Activated naive CD4-positive, alpha-beta T cell treated with anti-CD3 and anti-CD28 coated beads for 36 hours (primary cell): ENCODE measurements at regions of chr10 and their contacts with region 1.

Region 1: DNA sequence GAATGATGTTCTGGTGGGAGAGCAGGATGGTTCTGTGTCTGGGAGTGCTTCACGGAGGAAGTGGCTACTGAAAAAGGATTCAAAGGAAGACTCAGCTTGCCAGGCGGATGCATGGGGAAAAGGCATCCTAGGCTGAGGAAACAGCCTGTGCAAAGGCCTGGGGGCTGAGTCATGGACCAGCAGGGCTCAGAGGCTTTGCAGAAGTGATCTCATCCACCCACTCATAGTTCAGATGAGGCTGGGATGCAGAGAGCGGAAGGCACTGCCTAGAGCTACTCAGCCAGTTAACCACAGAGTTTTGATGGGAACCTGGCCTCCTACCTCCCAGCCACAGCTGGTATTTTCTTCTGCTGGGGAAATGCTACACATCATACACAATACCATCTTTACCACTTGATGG is 15.8 kb upstream of the ADAMTS14 start:
- DNase-seq: peak; percentile 78
- H3K4me3 Mint-ChIP-seq: no peak overlapping the region
- H3K27ac Mint-ChIP-seq: no peak overlapping the region
- H3K4me1 Mint-ChIP-seq: peaks cover 10% of the 10 kb centered on the region
- H3K27me3 Mint-ChIP-seq: no peaks in the 10 kb centered on the region

Region 2: DNA sequence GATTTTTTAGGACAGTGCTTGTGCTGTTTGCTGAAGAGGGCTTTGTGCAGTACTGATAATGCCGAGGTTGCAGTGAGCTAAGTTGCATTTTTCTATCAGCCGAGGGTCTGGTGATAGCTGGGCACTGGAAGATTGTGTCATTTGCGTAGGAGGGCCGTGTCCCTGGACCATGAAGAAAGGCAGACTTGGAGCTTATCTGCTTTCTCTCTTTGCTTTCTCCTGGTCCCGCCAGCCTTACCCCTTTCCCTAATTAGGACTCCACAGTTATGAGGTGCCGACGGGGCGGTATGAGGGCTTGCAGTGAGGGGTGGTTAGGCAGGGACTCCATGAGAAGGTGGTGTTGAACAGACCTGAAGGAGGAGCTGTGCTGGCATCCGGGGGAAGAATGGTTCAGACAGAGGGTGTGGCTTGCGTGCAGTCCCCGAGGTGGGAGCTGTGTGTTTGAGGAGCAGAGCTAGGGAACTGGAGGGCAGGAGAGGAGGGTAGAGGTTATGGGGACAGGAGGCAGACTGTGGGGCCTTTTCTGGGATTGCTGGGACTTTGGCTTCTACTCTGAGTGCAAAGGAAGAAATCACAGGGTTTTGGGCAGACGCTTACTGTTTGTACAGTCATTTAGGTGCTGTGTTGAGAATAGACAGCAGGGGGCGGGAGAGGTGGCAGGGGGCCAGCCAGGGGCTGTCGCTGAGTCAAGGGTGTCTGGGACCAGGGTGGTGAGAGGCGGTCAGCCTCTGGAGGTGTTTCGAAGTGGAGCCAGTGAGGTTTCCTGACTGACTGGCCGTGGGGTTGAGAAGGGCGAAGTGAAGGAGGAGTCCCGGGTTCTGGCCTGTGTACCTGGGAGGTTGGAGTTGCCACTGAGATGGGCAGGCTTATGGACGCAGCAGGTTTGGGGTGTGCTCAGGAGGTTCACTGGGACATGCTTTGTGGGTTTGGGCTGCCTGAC is 97.3 kb before region 1 on chr10:
- CTCF ChIA-PET with region 1: interaction called, 4 read pairs
- intact Hi-C with region 1: loop called (anchors 2 kb)
- DNase-seq: peak; percentile 81
- H3K4me3 Mint-ChIP-seq: peak overlapping the region; percentile 69
- H3K27ac Mint-ChIP-seq: no peak overlapping the region
- H3K4me1 Mint-ChIP-seq: peaks cover 11% of the 10 kb centered on the region
- H3K27me3 Mint-ChIP-seq: no peaks in the 10 kb centered on the region

Region 3: DNA sequence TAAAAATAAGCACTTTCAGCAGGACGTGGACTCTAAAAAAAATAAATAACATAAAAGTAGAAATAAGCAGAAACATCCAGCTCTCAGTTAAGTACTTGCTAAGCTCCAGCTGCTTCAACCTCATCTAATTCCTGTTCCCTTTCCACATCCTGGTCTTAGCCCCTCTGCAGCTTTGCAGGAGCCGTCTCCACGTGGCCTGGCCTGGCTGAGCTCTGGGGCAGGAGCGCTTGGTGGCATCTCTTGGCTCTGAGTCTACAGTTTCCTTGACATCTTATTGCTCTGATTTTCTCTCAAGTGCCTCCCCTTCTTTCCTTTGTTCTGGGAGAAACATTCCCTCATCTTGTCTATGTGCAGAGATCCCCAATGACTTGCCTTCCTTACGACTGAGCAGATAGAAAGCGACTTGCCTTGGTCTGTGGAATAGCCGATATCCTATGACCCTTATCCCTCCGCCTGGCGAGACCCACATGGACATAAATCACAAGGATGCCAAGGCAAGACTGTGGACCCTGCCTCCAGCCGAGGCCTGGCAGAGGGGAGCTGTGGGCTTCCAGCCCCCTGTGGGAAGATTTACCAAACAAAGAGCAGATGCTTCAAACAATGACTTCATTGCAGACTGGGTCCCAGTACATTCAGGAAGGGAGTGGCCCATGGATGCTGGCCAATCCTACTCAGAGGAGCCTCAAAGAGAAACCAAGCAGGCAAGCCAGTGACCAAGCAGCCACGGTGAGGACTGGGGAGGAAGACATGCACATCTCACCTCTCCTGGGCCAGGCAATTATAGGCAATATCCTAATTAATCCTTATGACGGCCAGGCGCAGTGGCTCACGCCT is 1370.0 kb after region 1 on chr10:
- CTCF ChIA-PET with region 1: no interaction called
- intact Hi-C with region 1: no loop called
- DNase-seq: no peak
- H3K4me3 Mint-ChIP-seq: no peak overlapping the region
- H3K27ac Mint-ChIP-seq: no peak overlapping the region
- H3K4me1 Mint-ChIP-seq: peaks cover 8% of the 10 kb centered on the region
- H3K27me3 Mint-ChIP-seq: no peaks in the 10 kb centered on the region